ENCODE measurements at regions of chr4 and their contacts with region 1.

Region 1: GRCh38 chr4:17324386-17324830 is 187.5 kb downstream of the QDPR start:
- DNase-seq: peak; percentile 61
- H3K4me3 Mint-ChIP-seq: no peak overlapping the region
- H3K27ac Mint-ChIP-seq: no peak overlapping the region
- H3K4me1 Mint-ChIP-seq: no peaks in the 10 kb centered on the region
- H3K27me3 Mint-ChIP-seq: no peaks in the 10 kb centered on the region
- CTCF ChIP-seq: peak; percentile 65

Region 2: DNA sequence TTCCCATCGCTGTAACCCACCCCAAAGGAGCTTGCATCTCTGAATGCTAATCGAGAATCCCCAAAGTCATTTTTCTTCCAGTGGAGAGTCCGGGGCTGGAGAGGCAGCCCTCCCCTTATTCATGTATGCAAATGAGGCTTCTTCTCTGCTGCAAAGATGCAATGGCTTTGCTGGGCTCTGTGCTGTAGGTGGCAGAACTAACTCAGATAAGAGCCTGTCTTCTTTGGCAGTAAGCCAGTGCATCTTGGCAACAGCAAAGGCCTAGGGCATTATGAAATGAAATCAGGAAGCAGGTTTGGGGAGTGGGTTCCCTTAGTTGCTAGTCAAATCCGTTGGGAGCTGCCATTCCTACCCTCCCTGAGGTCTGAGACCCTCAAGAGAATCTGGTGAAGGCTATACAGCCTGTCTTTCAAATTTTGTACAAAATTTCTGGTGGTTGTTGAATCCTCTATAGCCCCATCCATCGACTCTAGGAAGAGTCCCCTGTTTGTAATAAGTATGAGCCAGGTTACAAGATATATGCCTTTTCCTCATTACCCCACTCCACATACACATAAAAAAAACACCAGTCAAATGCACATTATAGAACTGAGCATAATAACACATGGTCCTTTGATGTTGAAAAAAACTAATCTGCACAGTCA is 807.5 kb before region 1 on chr4:
- CTCF ChIA-PET with region 1: interaction called, 42 read pairs
- POLR2A ChIA-PET with region 1: interaction called, 5 read pairs
- intact Hi-C with region 1: loop called (anchors 2 kb)
- DNase-seq: peak; percentile 72
- H3K4me3 Mint-ChIP-seq: no peak overlapping the region
- H3K27ac Mint-ChIP-seq: no peak overlapping the region
- H3K4me1 Mint-ChIP-seq: no peaks in the 10 kb centered on the region
- H3K27me3 Mint-ChIP-seq: peaks cover 80% of the 10 kb centered on the region
- CTCF ChIP-seq: peak; percentile 29

Region 3: DNA sequence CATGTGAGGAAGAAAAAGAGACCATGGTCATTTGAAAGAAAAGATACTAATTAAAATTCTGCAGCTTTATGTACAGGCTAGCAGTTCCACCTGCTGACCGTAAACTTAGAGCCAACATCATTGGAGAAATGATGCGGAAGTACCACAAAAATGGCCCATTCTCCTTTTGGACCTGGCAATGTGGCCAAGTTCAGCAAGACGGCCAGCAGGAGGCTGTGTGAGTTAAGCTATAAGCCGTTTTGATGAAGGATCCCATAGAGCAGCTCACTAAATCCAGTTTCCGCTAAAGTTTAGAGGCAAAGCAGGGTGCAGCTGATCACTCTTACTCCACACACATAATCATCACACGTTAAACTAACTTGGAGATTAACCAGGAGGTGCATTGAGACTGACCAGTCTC is 559.8 kb before region 1 on chr4:
- CTCF ChIA-PET with region 1: interaction called, 11 read pairs
- POLR2A ChIA-PET with region 1: no interaction called
- intact Hi-C with region 1: loop called (anchors 10 kb)
- DNase-seq: peak; percentile 13
- H3K4me3 Mint-ChIP-seq: no peak overlapping the region
- H3K27ac Mint-ChIP-seq: no peak overlapping the region
- H3K4me1 Mint-ChIP-seq: peaks cover 8% of the 10 kb centered on the region
- H3K27me3 Mint-ChIP-seq: peaks cover 12% of the 10 kb centered on the region
- CTCF ChIP-seq: no peak

Region 4: GRCh38 chr4:16916719-16917337 is 407.6 kb before region 1 on chr4:
- CTCF ChIA-PET with region 1: interaction called, 5 read pairs
- POLR2A ChIA-PET with region 1: no interaction called
- intact Hi-C with region 1: loop called (anchors 1 kb)
- DNase-seq: peak; percentile 81
- H3K4me3 Mint-ChIP-seq: no peak overlapping the region
- H3K27ac Mint-ChIP-seq: no peak overlapping the region
- H3K4me1 Mint-ChIP-seq: no peaks in the 10 kb centered on the region
- H3K27me3 Mint-ChIP-seq: no peaks in the 10 kb centered on the region
- CTCF ChIP-seq: peak; percentile 94

Region 5: DNA sequence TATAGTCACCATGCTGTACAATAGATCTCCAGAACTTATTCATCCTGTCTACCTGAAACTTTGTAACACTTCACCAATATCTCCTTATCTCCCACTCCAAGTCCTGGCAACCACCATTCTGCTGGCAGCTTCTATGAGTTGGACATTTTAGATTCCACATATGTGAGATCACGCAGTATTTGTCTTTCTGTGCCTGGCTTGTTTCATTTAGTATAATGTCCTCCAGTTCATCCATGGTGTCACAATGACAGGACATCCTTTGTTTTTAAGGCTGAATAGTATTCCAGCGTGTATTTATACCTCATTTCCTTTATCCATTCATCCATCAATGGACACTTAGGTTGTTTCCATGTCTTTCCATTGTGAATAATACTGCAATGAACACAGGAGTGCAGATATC is 11.2 kb before region 1 on chr4:
- CTCF ChIA-PET with region 1: interaction called, 15 read pairs
- POLR2A ChIA-PET with region 1: no interaction called
- intact Hi-C with region 1: no loop called
- DNase-seq: no peak
- H3K4me3 Mint-ChIP-seq: no peak overlapping the region
- H3K27ac Mint-ChIP-seq: no peak overlapping the region
- H3K4me1 Mint-ChIP-seq: peaks cover 10% of the 10 kb centered on the region
- H3K27me3 Mint-ChIP-seq: peaks cover 17% of the 10 kb centered on the region
- CTCF ChIP-seq: no peak